CD4-positive, alpha-beta memory T cell (primary cell): ENCODE measurements at regions of chr4 and their contacts with region 1.

Region 1: GRCh38 chr4:37603070-37603468 is 83.1 kb downstream of the RELL1 start:
- DNase-seq: peak; percentile 54 to 69 (median 58)
- H3K4me3 ChIP-seq: no peak overlapping the region
- H3K4me3 Mint-ChIP-seq: peak overlapping the region in 1 of 8 donors; percentile 23
- H3K27ac ChIP-seq: no peak overlapping the region
- H3K27ac Mint-ChIP-seq: peak overlapping the region in 3 of 7 donors; percentile 63 to 77 (median 73)
- H3K4me1 ChIP-seq: peaks cover 4% of the 10 kb centered on the region
- H3K4me1 Mint-ChIP-seq: peaks cover 4 to 11% (median 6%) of the 10 kb centered on the region in 4 donors
- H3K27me3 ChIP-seq: no peaks in the 10 kb centered on the region
- H3K27me3 Mint-ChIP-seq: no peaks in the 10 kb centered on the region

Region 2: GRCh38 chr4:37138019-37138653 is 464.9 kb before region 1 on chr4:
- CTCF ChIA-PET with region 1: no interaction called
- POLR2A ChIA-PET with region 1: no interaction called
- intact Hi-C with region 1: no loop called
- DNase-seq: no peak
- H3K4me3 ChIP-seq: no peak overlapping the region
- H3K4me3 Mint-ChIP-seq: no peak overlapping the region
- H3K27ac ChIP-seq: no peak overlapping the region
- H3K27ac Mint-ChIP-seq: no peak overlapping the region
- H3K4me1 ChIP-seq: no peaks in the 10 kb centered on the region
- H3K4me1 Mint-ChIP-seq: no peaks in the 10 kb centered on the region
- H3K27me3 ChIP-seq: no peaks in the 10 kb centered on the region
- H3K27me3 Mint-ChIP-seq: no peaks in the 10 kb centered on the region

Region 3: GRCh38 chr4:37452952-37453280 is 150.2 kb before region 1 on chr4:
- CTCF ChIA-PET with region 1: interaction called, 3 read pairs
- POLR2A ChIA-PET with region 1: no interaction called
- intact Hi-C with region 1: loop called (anchors 1 kb)
- DNase-seq: peak in 4 of 5 donors; percentile 28 to 34 (median 28)
- H3K4me3 ChIP-seq: peak overlapping the region; percentile 13 to 41
- H3K4me3 Mint-ChIP-seq: peak overlapping the region; percentile 76 to 88 (median 79)
- H3K27ac ChIP-seq: no peak overlapping the region
- H3K27ac Mint-ChIP-seq: no peak overlapping the region
- H3K4me1 ChIP-seq: peaks cover 13% of the 10 kb centered on the region
- H3K4me1 Mint-ChIP-seq: peaks cover 4 to 16% (median 12%) of the 10 kb centered on the region in 4 donors
- H3K27me3 ChIP-seq: peaks cover 20% of the 10 kb centered on the region
- H3K27me3 Mint-ChIP-seq: peaks cover 32 to 36% of the 10 kb centered on the region in 2 donors

Region 4: DNA sequence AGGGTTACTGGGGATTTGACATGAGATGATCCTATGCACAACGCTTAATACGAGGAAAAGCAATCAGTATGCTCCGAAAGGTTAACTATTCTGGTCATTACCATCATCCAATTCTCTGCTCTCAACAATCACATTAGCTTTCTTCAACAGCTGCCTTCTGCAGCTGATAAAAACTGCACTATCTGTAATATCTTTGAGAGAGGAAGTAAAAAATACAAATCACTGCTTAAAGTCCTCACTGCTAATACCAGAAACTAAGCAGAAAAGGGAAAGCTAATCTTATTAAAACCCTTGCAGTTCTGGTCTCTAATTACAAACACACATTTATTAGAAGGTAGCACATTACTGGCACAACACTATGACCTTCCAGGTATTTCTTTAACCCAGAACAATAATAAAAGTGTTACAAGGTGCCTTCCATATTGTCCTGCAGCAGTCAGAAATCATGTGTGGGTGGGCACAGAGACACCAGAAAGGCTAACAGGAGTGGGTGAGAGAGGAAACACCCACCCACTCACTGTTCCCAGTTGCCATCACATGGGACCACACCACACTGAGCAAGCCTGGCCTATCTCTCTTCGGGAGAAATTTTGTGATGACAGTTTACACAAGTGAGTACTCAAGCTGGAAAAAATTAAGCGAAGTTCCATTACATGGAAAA is 12.1 kb after region 1 on chr4:
- CTCF ChIA-PET with region 1: interaction called, 51 read pairs
- POLR2A ChIA-PET with region 1: no interaction called
- intact Hi-C with region 1: no loop called
- DNase-seq: no peak
- H3K4me3 ChIP-seq: no peak overlapping the region
- H3K4me3 Mint-ChIP-seq: no peak overlapping the region
- H3K27ac ChIP-seq: no peak overlapping the region
- H3K27ac Mint-ChIP-seq: peak overlapping the region in 3 of 7 donors; percentile 32 to 71 (median 48)
- H3K4me1 ChIP-seq: no peaks in the 10 kb centered on the region
- H3K4me1 Mint-ChIP-seq: peaks cover 0 to 11% (median 5%) of the 10 kb centered on the region in 4 donors
- H3K27me3 ChIP-seq: no peaks in the 10 kb centered on the region
- H3K27me3 Mint-ChIP-seq: no peaks in the 10 kb centered on the region

Region 5: GRCh38 chr4:37780444-37781150 is 177.5 kb after region 1 on chr4:
- CTCF ChIA-PET with region 1: interaction called, 175 read pairs
- POLR2A ChIA-PET with region 1: interaction called, 3 read pairs
- intact Hi-C with region 1: loop called (anchors 1 kb)
- DNase-seq: peak; percentile 61 to 79 (median 77)
- H3K4me3 ChIP-seq: no peak overlapping the region
- H3K4me3 Mint-ChIP-seq: peak overlapping the region in 6 of 8 donors; percentile 41 to 76 (median 48)
- H3K27ac ChIP-seq: no peak overlapping the region
- H3K27ac Mint-ChIP-seq: peak overlapping the region; percentile 76 to 97 (median 91)
- H3K4me1 ChIP-seq: peaks cover 20% of the 10 kb centered on the region
- H3K4me1 Mint-ChIP-seq: peaks cover 15 to 27% (median 20%) of the 10 kb centered on the region in 4 donors
- H3K27me3 ChIP-seq: no peaks in the 10 kb centered on the region
- H3K27me3 Mint-ChIP-seq: peaks cover 1% of the 10 kb centered on the region in 2 donors

Region 6: DNA sequence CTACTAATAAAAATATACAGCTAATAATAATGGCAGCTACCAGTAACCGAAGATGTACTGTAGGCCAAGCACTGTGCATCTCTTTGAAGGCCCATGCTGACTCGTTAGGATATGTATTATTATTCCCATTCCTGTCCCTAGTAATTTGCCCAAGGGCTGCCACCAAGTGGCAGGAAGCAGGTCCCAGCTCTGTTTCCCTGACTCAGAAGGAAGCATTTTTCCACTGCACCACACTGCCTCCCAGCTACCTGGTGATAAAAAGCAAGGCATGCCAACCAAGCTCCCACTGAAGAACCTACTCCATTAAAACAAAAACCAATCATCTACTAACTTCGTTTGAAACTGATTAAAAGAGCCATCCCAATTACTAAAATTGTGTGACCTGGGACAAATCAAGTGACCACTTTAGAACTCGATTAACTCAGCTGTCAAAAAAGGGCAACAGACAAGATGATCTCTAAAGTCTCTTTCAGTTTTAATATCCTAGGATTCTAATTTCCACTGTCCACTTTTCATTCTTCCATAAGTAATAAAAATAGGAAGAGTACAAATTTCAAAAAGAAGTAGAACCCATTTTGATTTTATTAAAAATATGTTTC is 199.1 kb after region 1 on chr4:
- CTCF ChIA-PET with region 1: interaction called, 43 read pairs
- POLR2A ChIA-PET with region 1: no interaction called
- intact Hi-C with region 1: no loop called
- DNase-seq: no peak
- H3K4me3 ChIP-seq: no peak overlapping the region
- H3K4me3 Mint-ChIP-seq: no peak overlapping the region
- H3K27ac ChIP-seq: no peak overlapping the region
- H3K27ac Mint-ChIP-seq: no peak overlapping the region
- H3K4me1 ChIP-seq: no peaks in the 10 kb centered on the region
- H3K4me1 Mint-ChIP-seq: no peaks in the 10 kb centered on the region
- H3K27me3 ChIP-seq: no peaks in the 10 kb centered on the region
- H3K27me3 Mint-ChIP-seq: peaks cover 0 to 4% of the 10 kb centered on the region in 2 donors

Region 7: GRCh38 chr4:38034986-38035882 is 432.2 kb after region 1 on chr4:
- CTCF ChIA-PET with region 1: interaction called, 4 read pairs
- POLR2A ChIA-PET with region 1: no interaction called
- intact Hi-C with region 1: loop called (anchors 1 kb)
- DNase-seq: peak; percentile 46 to 60 (median 56)
- H3K4me3 ChIP-seq: no peak overlapping the region
- H3K4me3 Mint-ChIP-seq: no peak overlapping the region
- H3K27ac ChIP-seq: no peak overlapping the region
- H3K27ac Mint-ChIP-seq: peak overlapping the region in 1 of 7 donors; percentile 68
- H3K4me1 ChIP-seq: no peaks in the 10 kb centered on the region
- H3K4me1 Mint-ChIP-seq: peaks cover 0 to 3% (median 0%) of the 10 kb centered on the region in 4 donors
- H3K27me3 ChIP-seq: no peaks in the 10 kb centered on the region
- H3K27me3 Mint-ChIP-seq: no peaks in the 10 kb centered on the region